Natural killer cell (primary cell): ENCODE measurements at regions of chr12 and their contacts with region 1.

Region 1: DNA sequence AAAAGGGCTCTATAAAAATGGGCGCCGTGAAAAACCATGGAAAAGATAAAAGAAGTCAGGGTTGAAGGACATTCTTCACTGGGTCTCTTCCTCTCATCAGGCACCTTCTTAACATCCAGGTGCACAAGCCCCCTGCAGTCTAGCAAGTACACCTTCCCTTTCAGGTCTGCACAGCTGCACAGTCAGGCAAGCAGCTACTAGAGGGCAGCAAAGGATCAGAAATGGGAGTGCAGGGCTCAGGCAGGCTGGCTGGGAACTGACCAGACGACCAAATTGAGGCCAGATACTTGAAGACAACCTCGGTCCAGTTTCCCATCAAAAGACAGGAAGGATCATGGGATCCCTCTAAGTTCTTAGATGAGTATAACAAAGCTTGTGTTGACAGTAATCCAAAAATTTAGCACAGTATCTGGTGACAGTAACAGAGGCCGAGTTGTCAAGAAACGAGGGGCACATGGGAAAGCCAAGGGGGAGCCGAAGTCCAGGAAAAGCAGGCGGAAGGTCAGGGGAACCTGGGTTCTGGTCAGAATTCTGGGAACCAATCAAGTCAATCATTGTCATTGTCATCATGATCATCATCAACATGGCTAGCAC is 10.1 kb upstream of the GRIP1 start:
- DNase-seq: peak; percentile 17 to 68
- ATAC-seq: peak in 2 of 3 donors; percentile 31 to 76
- H3K4me3 ChIP-seq: no peak overlapping the region
- H3K4me3 Mint-ChIP-seq: no peak overlapping the region
- H3K27ac ChIP-seq: no peak overlapping the region
- H3K27ac Mint-ChIP-seq: no peak overlapping the region
- H3K4me1 ChIP-seq: no peaks in the 10 kb centered on the region
- H3K4me1 Mint-ChIP-seq: no peaks in the 10 kb centered on the region
- H3K27me3 ChIP-seq: no peaks in the 10 kb centered on the region
- H3K27me3 Mint-ChIP-seq: peaks cover 15 to 17% of the 10 kb centered on the region in 2 donors
- CTCF ChIP-seq: peak; percentile 42

Region 2: DNA sequence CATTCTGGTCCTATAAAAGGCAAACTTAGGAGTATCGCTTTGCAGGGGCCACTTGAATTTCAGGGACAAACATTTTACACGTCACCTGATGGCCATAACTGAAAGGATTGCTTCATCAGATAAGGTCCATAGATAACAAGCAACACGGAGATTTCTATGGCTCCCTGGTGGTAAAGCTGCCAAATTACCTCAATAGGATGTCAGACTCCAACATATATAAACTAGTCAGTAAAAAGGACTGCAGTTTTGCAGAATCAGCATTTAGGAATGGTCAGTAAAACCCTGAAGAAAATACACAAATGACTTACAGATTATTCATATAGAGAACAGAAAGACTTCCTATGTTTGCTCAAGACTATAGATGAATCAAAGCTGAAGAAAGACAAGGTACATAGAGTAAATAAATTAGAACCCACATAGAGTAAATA is 56.0 kb after region 1 on chr12:
- intact Hi-C with region 1: no loop called
- DNase-seq: no peak
- ATAC-seq: no peak
- H3K4me3 ChIP-seq: no peak overlapping the region
- H3K4me3 Mint-ChIP-seq: no peak overlapping the region
- H3K27ac ChIP-seq: no peak overlapping the region
- H3K27ac Mint-ChIP-seq: no peak overlapping the region
- H3K4me1 ChIP-seq: peaks cover 2% of the 10 kb centered on the region
- H3K4me1 Mint-ChIP-seq: peaks cover 14 to 15% of the 10 kb centered on the region in 2 donors
- H3K27me3 ChIP-seq: peaks cover 3% of the 10 kb centered on the region
- H3K27me3 Mint-ChIP-seq: peaks cover 6 to 17% of the 10 kb centered on the region in 2 donors
- CTCF ChIP-seq: no peak

Region 3: GRCh38 chr12:66860752-66861750 is 172.1 kb after region 1 on chr12:
- intact Hi-C with region 1: loop called (anchors 1 kb)
- DNase-seq: peak; percentile 55 to 83
- ATAC-seq: peak; percentile 68 to 79 (median 75)
- H3K4me3 ChIP-seq: no peak overlapping the region
- H3K4me3 Mint-ChIP-seq: no peak overlapping the region
- H3K27ac ChIP-seq: no peak overlapping the region
- H3K27ac Mint-ChIP-seq: no peak overlapping the region
- H3K4me1 ChIP-seq: peaks cover 5% of the 10 kb centered on the region
- H3K4me1 Mint-ChIP-seq: peaks cover 13 to 26% of the 10 kb centered on the region in 2 donors
- H3K27me3 ChIP-seq: no peaks in the 10 kb centered on the region
- H3K27me3 Mint-ChIP-seq: peaks cover 9 to 28% of the 10 kb centered on the region in 2 donors
- CTCF ChIP-seq: peak; percentile 98